A673 (cell line): ENCODE measurements at regions of chr2 and their contacts with region 1.

Region 1: GRCh38 chr2:133561045-133561852 is 7.0 kb downstream of the NCKAP5 start:
- DNase-seq: peak; percentile 91
- H3K4me3 ChIP-seq: no peak overlapping the region
- H3K27ac ChIP-seq: peak overlapping the region; percentile 69
- H3K4me1 ChIP-seq: peaks cover 64% of the 10 kb centered on the region
- H3K27me3 ChIP-seq: no peaks in the 10 kb centered on the region
- CTCF ChIP-seq: peak; percentile 89

Region 2: DNA sequence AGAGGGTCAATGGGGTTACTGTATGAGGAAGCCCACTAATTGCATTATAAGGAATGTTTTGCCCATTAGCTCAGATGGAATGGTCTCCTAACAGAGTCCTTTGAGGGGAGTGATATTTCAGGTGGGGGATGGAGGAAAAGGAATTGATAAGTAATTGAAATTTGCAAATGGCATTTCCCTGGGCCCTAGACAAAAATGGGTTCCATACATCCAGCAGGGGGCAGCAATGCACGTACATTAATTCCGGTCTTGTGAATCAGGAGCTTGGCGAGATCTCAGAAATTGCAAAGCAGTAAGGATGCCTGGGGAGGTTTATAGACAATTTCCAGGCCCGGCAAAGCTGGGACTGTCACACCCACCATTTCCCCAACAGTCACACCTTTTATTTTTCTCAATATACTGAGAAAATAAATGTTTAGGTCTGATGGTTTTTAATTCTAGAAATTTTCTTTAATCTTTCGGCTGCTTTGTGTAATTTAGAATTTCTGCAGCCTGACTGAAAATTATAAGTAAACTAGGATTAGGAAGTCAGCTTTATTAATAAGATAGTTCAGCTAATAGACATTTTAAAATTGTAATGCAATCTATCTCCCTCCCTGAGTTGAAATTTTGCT is 1014.1 kb before region 1 on chr2:
- CTCF ChIA-PET with region 1: interaction called, 7 read pairs
- POLR2A ChIA-PET with region 1: interaction called, 4 read pairs
- intact Hi-C with region 1: loop called (anchors 5 kb)
- DNase-seq: peak; percentile 88
- H3K4me3 ChIP-seq: no peak overlapping the region
- H3K27ac ChIP-seq: no peak overlapping the region
- H3K4me1 ChIP-seq: peaks cover 14% of the 10 kb centered on the region
- H3K27me3 ChIP-seq: no peaks in the 10 kb centered on the region
- CTCF ChIP-seq: peak; percentile 82

Region 3: DNA sequence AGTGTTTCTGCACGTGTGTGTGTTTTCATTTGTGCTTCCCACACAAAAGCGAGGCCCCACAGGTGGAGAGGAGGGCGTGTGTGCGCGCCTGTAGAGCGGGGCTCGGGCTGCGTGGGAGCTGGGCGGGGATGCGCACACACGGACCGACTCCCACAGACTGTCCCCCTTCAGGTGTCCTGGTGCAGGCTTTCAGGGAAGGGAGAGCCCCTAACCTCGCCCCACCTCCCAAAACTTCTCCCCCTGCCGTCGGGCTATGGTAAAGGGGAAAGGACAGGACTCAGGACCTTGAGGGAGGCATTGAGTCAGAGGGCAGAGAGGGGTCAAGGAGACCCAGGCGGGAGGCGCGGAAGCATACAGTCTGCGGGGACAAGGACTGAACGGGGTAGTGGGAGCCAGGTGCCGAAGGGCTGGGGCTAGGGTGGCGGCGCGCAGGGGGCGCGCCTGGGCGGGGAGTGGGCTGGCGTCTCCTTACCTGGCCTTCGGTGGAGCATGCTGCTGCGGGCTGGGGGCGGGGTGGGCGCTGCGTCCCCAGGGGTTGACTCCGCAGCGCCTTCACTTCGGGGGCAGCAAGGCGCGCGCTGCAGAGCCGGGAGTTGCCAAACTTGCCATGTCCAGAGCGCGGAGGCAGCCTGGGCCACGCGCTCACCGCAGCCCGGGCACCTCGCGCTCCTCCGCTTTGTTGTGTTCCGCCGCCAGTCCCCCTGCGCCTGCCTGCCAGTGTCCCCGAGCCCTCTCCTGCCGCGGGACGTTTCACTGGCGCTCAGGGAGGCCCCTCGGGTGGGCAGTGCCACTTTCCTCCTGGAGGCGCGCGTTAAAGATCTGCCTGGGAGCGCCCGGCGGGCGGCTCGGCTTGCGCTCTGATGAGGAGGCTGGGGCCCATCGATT is 295.0 kb before region 1 on chr2:
- CTCF ChIA-PET with region 1: interaction called, 6 read pairs
- POLR2A ChIA-PET with region 1: no interaction called
- intact Hi-C with region 1: loop called (anchors 2 kb)
- DNase-seq: peak; percentile 69
- H3K4me3 ChIP-seq: peak overlapping the region; percentile 81
- H3K27ac ChIP-seq: peak overlapping the region; percentile 81
- H3K4me1 ChIP-seq: peaks cover 50% of the 10 kb centered on the region
- H3K27me3 ChIP-seq: no peaks in the 10 kb centered on the region
- CTCF ChIP-seq: peak; percentile 47

Region 4: GRCh38 chr2:133414486-133415209 is 146.6 kb before region 1 on chr2:
- CTCF ChIA-PET with region 1: no interaction called
- POLR2A ChIA-PET with region 1: no interaction called
- intact Hi-C with region 1: loop called (anchors 5 kb)
- DNase-seq: no peak
- H3K4me3 ChIP-seq: no peak overlapping the region
- H3K27ac ChIP-seq: no peak overlapping the region
- H3K4me1 ChIP-seq: peaks cover 22% of the 10 kb centered on the region
- H3K27me3 ChIP-seq: no peaks in the 10 kb centered on the region
- CTCF ChIP-seq: no peak

Region 5: GRCh38 chr2:133526530-133527300 is 34.5 kb before region 1 on chr2:
- CTCF ChIA-PET with region 1: interaction called, 12 read pairs
- POLR2A ChIA-PET with region 1: no interaction called
- intact Hi-C with region 1: loop called (anchors 1 kb)
- DNase-seq: peak; percentile 92
- H3K4me3 ChIP-seq: no peak overlapping the region
- H3K27ac ChIP-seq: peak overlapping the region; percentile 98
- H3K4me1 ChIP-seq: peaks cover 73% of the 10 kb centered on the region
- H3K27me3 ChIP-seq: no peaks in the 10 kb centered on the region
- CTCF ChIP-seq: no peak